ENCODE measurements at regions of chr2 and their contacts with region 1.

Region 1: DNA sequence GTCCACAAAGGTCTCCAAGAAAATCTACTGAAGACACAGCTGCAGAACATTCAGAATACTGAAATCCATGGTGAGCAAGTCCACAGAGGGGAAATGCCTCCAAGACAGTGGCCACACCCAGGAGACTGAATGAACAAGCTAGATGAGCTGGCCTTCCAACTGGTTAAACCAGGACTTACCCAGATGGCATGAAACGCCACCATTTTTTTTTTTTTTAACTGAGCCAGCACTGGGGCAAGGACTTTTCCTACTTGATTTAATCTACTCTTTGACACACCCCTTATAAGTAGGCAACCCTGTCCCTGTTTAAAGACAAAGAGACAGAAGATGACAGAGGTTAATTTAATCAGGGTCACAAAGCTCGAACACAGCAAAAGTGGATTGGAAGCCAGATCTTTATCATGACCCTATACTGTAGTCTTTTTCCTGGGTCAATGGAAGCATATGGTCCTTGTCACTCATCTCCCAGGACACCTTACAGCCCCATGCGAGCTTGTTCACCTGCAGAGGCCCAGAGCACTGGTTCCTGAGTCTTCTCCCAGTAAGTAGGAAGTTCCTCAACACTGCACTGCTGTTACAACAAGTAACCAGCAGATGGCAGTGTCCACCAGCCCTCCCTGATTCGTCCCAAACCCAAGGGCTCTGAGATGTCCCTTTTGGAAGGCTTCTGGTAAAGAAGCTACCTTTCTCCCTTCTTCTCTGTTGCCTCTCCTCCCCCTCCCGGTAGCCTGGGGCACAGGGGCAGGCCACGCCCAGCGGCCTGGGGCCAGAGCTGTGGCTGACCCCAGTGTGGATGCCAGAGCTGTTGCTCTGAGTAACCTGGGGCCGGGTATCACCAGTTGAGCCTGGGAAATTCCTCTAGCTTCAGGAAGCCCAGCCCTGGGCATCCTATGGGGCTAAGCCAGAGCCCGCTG is 5.6 kb upstream of the GDF7 start:
- DNase-seq: peak; percentile 85
- H3K4me3 ChIP-seq: no peak overlapping the region
- H3K27ac ChIP-seq: no peak overlapping the region
- H3K4me1 ChIP-seq: peaks cover 0 to 25% (median 18%) of the 10 kb centered on the region in 4 donors
- H3K27me3 ChIP-seq: peaks cover 19 to 51% (median 21%) of the 10 kb centered on the region in 3 donors
- CTCF ChIP-seq: peak; percentile 90 to 97 (median 92)
- EP300 ChIP-seq: no peak
- POLR2A ChIP-seq: no peak

Region 2: DNA sequence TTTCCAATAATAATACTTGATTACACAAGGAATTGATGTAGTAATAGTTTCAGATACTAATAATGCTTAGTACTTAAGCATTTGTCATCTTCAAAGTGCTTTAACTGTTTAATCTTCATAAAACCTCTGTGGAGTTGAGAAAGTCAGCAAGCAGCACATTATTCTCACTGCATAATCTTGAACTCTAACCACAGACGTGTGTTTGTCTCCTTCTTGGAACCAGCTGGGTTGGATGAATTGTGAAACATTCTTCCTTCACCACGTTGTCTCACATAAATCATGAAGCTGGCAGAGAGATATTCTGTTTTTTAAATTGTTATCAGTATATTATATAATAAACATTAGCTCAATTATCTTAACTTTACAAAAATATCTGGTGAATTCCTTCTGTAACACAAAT is 216.6 kb after region 1 on chr2:
- intact Hi-C with region 1: no loop called
- DNase-seq: no peak
- H3K4me3 ChIP-seq: no peak overlapping the region
- H3K27ac ChIP-seq: no peak overlapping the region
- H3K4me1 ChIP-seq: peaks cover 0 to 6% (median 3%) of the 10 kb centered on the region in 4 donors
- H3K27me3 ChIP-seq: no peaks in the 10 kb centered on the region
- CTCF ChIP-seq: no peak
- EP300 ChIP-seq: no peak
- POLR2A ChIP-seq: no peak

Region 3: GRCh38 chr2:21118302-21118920 is 457.1 kb after region 1 on chr2:
- intact Hi-C with region 1: loop called (anchors 2 kb)
- DNase-seq: no peak
- H3K4me3 ChIP-seq: no peak overlapping the region
- H3K27ac ChIP-seq: no peak overlapping the region
- H3K4me1 ChIP-seq: no peaks in the 10 kb centered on the region
- H3K27me3 ChIP-seq: no peaks in the 10 kb centered on the region
- CTCF ChIP-seq: peak in 3 of 4 experiments; percentile 41 to 53 (median 45)
- EP300 ChIP-seq: no peak
- POLR2A ChIP-seq: no peak